ENCODE measurements at regions of chr21 and their contacts with region 1.

Region 1: DNA sequence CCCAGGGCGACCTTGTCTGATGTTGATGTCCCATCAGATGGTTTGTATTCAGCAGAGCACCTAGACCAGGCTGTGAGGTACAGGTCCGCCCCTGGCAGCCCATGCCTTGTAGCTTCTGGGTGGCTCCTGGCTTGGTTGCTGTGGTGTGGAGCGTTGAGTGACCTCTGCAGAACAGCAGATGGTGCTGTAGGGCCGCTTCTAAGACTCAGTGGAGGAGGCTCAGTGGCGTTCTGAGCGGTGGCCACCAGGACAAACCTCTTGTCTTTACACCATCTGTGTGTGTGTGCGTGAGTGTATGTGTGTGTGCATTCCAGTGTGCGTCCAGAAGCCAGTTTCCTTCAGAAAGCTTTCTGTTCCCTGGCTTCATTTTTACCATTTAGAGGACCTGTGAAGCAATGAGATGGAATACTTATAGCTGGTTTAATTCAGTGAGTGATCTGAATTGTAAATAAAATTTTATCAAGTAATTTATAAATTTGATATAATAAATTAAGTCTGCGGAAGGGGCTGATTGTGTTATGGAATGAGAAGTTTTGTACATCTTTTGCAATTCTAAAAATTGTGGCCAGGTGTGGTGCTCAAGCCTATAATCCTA is 66.1 kb downstream of the ADARB1 start:
- DNase-seq: peak; percentile 77
- H3K4me3 Mint-ChIP-seq: no peak overlapping the region
- H3K27ac Mint-ChIP-seq: no peak overlapping the region
- H3K4me1 Mint-ChIP-seq: peaks cover 4% of the 10 kb centered on the region
- H3K27me3 Mint-ChIP-seq: no peaks in the 10 kb centered on the region

Region 2: GRCh38 chr21:44927587-44928461 is 212.6 kb before region 1 on chr21:
- CTCF ChIA-PET with region 1: interaction called, 17 read pairs
- POLR2A ChIA-PET with region 1: no interaction called
- intact Hi-C with region 1: no loop called
- DNase-seq: peak; percentile 96
- H3K4me3 Mint-ChIP-seq: peak overlapping the region; percentile 85
- H3K27ac Mint-ChIP-seq: peak overlapping the region; percentile 96
- H3K4me1 Mint-ChIP-seq: peaks cover 74% of the 10 kb centered on the region
- H3K27me3 Mint-ChIP-seq: no peaks in the 10 kb centered on the region

Region 3: DNA sequence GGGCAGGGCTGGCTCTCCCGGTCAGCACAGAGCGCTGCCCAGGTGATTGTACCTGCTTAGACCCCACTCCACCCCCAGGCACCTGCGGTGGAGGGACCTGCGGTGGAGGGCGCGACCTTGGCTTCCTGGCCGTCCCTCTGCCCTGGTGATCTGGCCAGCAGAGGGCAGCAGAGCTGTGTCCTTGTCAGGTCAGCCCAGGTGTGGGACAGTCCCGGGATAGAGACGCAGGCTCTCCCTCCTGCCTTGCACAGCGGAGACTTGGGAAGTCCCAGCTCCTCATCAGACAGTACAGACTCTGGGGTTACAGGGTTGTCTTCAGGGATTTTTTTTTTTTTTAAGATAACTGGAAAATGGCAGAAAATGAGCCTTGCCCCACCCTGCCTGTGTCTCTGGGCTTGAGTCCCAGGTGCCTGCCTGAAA is 190.7 kb before region 1 on chr21:
- CTCF ChIA-PET with region 1: interaction called, 214 read pairs
- POLR2A ChIA-PET with region 1: interaction called, 3 read pairs
- intact Hi-C with region 1: no loop called
- DNase-seq: peak; percentile 87
- H3K4me3 Mint-ChIP-seq: no peak overlapping the region
- H3K27ac Mint-ChIP-seq: no peak overlapping the region
- H3K4me1 Mint-ChIP-seq: peaks cover 6% of the 10 kb centered on the region
- H3K27me3 Mint-ChIP-seq: no peaks in the 10 kb centered on the region

Region 4: GRCh38 chr21:45074048-45074817 is 66.2 kb before region 1 on chr21 and contains the start of gene ADARB1:
- CTCF ChIA-PET with region 1: interaction called, 29 read pairs
- POLR2A ChIA-PET with region 1: interaction called, 3 read pairs
- intact Hi-C with region 1: no loop called
- DNase-seq: peak; percentile 64
- H3K4me3 Mint-ChIP-seq: peak within 1 kb of the TSS; percentile 84
- H3K27ac Mint-ChIP-seq: peak within 1 kb of the TSS; percentile 75
- H3K4me1 Mint-ChIP-seq: peaks cover 43% of the 10 kb centered on the region
- H3K27me3 Mint-ChIP-seq: no peaks in the 10 kb centered on the region
- total RNA-seq, gene ADARB1: 37.6 to 40.6 TPM

Region 5: DNA sequence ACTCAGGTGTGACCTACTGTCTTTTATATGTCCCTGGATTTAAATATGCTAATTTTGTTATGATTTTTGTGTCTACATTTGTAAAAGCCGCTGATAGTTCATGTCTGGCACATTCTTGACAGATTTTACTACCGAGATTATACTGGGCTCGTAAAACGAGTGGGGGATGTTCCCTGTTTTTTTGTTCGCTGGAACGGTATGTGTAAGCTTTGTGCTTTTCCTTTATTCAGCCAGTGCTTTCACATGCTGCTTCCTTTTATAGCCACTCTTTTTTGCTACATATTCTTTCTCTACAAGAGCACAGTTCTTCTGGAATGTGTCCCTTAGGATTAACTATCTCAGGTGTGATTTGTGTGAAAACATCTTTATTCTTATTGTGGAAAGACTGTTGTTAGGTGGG is 19.5 kb before region 1 on chr21:
- CTCF ChIA-PET with region 1: interaction called, 166 read pairs
- POLR2A ChIA-PET with region 1: no interaction called
- intact Hi-C with region 1: no loop called
- DNase-seq: no peak
- H3K4me3 Mint-ChIP-seq: no peak overlapping the region
- H3K27ac Mint-ChIP-seq: no peak overlapping the region
- H3K4me1 Mint-ChIP-seq: peaks cover 9% of the 10 kb centered on the region
- H3K27me3 Mint-ChIP-seq: no peaks in the 10 kb centered on the region

Region 6: DNA sequence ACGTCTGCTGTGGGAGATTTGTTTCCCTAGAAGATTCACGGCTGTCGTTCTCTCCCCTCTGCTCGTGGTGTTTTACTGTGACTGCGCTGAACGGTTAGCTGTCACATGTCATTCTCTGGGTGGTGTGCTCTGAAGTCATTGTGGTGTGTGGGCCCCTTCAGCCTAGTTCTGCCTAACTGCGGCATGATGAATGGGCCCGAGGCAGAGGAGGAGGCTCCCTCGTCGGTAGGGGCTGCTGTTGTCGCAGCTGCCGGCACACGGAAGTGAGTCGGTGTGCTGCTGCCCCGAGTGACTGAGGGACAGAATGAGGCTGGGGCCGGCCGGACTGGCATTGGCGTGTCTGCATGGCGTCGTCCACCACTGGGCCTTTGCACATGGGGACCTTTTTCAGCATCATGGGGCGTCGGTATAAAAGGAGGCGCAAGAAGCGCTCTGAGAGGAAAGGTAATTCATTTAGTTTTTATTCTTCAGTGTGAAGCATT is 11.9 kb after region 1 on chr21:
- CTCF ChIA-PET with region 1: interaction called, 65 read pairs
- POLR2A ChIA-PET with region 1: interaction called, 3 read pairs
- intact Hi-C with region 1: no loop called
- DNase-seq: peak; percentile 78
- H3K4me3 Mint-ChIP-seq: no peak overlapping the region
- H3K27ac Mint-ChIP-seq: no peak overlapping the region
- H3K4me1 Mint-ChIP-seq: peaks cover 35% of the 10 kb centered on the region
- H3K27me3 Mint-ChIP-seq: no peaks in the 10 kb centered on the region

Measured in activated CD4-positive, alpha-beta memory T cell treated with anti-CD3 and anti-CD28 coated beads for 36 hours (primary cell).